Activated CD4-positive, alpha-beta T cell treated with anti-CD3 and anti-CD28 coated beads, Interleukin-2, amount 10 ng/mL, durations not matched to agents 24 days and 14 days (primary cell): ENCODE measurements at regions of chr6 and their contacts with region 1.

Region 1: DNA sequence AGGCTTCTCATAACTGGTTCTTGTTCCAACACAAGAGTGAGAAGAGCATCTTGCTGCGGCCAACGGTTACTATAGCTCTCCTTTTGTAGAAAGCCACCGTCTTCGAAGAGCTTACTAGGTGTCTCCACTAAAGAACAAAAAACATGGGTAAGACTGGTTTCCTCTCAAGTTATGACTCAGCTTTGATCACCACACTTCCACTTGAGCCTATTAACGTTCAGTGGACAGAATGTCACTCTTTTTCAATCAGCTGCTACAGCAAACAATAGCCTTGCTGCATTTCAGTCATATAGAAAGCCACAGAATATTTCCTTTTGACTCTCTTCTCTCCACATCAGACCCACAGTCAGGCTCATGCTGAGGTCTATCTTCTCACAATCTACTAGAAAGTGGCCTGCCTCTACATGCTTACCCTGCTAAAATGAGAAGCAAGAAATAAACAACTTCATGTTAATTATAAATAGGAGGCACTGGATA is 243.5 kb upstream of the PREP start:
- DNase-seq: peak; percentile 88
- H3K4me3 Mint-ChIP-seq: peak overlapping the region; percentile 39
- H3K27ac Mint-ChIP-seq: peak overlapping the region; percentile 90
- H3K4me1 Mint-ChIP-seq: peaks cover 70% of the 10 kb centered on the region
- H3K27me3 Mint-ChIP-seq: no peaks in the 10 kb centered on the region

Region 2: GRCh38 chr6:105560611-105561066 is 85.8 kb before region 1 on chr6:
- intact Hi-C with region 1: loop called (anchors 2 kb)
- DNase-seq: peak; percentile 58
- H3K4me3 Mint-ChIP-seq: no peak overlapping the region
- H3K27ac Mint-ChIP-seq: no peak overlapping the region
- H3K4me1 Mint-ChIP-seq: no peaks in the 10 kb centered on the region
- H3K27me3 Mint-ChIP-seq: peaks cover 17% of the 10 kb centered on the region

Region 3: GRCh38 chr6:105626295-105627158 is 19.9 kb before region 1 on chr6:
- intact Hi-C with region 1: loop called (anchors 1 kb)
- DNase-seq: no peak
- H3K4me3 Mint-ChIP-seq: peak overlapping the region; percentile 60
- H3K27ac Mint-ChIP-seq: peak overlapping the region; percentile 92
- H3K4me1 Mint-ChIP-seq: peaks cover 40% of the 10 kb centered on the region
- H3K27me3 Mint-ChIP-seq: peaks cover 9% of the 10 kb centered on the region

Region 4: DNA sequence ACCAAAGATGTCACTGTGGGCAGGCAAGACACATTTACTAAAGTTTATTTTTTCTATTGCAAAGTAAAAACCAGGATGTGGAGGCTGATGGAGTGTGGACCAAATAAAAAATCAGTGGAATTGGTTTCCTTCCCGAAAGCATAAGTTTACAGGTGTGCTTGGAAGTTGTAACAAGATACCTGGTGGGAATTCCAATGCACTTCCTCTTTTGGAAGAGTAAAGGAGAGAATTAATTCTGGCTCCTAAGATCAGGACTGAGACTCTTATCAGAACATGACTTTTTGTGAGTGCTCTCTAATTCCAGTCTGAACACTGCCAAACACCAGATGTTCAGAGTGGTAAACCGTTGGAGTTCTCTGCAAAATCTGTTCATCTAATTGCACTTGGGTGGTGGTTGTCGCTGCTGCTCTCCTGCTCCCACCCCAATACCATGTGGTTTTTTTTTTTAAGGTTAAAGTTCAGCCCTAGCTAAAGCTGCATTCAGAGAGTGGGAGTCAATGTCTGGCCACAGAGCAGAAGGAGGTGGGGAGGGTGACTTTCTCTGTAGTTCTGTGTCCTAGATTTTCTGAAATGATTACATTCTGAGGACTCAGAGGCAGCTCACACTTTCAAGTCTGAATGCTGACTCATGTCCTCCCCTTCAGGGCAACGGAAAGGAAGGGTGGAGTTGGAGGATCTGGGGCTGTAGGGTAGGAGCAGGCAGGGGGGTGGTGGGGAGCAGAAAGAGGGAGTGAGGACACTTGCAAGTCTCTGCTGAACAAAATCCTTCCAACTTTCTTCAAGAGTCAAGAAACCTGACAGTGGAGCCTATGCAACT is 163.9 kb after region 1 on chr6:
- intact Hi-C with region 1: loop called (anchors 5 kb)
- DNase-seq: peak; percentile 89
- H3K4me3 Mint-ChIP-seq: peak overlapping the region; percentile 45
- H3K27ac Mint-ChIP-seq: peak overlapping the region; percentile 71
- H3K4me1 Mint-ChIP-seq: peaks cover 67% of the 10 kb centered on the region
- H3K27me3 Mint-ChIP-seq: no peaks in the 10 kb centered on the region

Region 5: DNA sequence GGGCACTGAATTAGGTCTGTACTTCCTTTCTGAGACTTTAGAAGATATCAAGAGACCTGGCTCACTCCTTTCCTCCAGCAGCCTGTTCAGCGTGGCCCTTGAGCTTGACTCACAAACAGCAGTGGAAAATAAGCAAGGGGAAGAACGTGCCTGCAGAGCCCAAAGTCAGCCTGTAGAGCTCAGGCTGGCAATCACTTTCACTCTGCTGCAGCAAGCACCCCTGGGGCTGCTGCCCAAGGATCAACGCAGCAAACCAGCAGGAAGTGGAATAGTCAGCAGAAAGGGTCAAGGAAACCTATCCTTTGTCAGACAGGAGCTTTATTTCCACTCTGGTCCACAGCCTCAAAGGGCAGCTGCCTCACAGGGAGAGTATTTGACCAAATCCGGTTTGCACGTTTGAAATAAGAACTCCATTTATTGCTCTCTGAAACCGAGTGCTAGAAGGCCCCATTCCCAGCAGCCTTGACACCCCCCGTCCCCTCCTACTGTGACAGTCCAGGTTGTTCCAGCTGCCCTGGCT is 517.1 kb after region 1 on chr6:
- intact Hi-C with region 1: loop called (anchors 1 kb)
- DNase-seq: peak; percentile 88
- H3K4me3 Mint-ChIP-seq: peak overlapping the region; percentile 71
- H3K27ac Mint-ChIP-seq: peak overlapping the region; percentile 92
- H3K4me1 Mint-ChIP-seq: peaks cover 53% of the 10 kb centered on the region
- H3K27me3 Mint-ChIP-seq: no peaks in the 10 kb centered on the region